Transverse colon (tissue), 4 donors: ENCODE measurements at regions of chr13 and their contacts with region 1.

Region 1: DNA sequence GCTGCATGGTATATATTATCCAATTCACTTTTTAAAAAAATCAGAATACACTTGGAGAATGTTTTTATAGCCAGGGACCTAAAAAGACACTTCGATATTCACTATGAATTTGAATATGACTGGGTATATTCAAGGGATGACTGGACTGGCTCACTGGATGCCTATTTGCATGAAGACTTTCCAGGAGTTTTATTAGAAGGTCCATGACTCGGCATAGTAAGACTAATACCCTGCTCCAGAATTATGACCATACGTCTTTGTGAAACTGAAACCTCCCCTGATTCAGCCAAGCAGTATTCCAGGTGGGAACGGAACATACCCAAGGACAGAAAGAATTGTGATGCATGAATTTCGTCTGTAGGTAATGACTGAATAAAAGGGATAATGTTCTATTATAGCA is 3.9 kb upstream of the FAM216B start:
- DNase-seq: no peak
- H3K4me3 ChIP-seq: no peak overlapping the region
- H3K27ac ChIP-seq: no peak overlapping the region
- H3K4me1 ChIP-seq: no peaks in the 10 kb centered on the region
- H3K27me3 ChIP-seq: no peaks in the 10 kb centered on the region
- CTCF ChIP-seq: no peak
- EP300 ChIP-seq: no peak
- POLR2A ChIP-seq: no peak

Region 2: GRCh38 chr13:42612021-42612765 is 165.3 kb before region 1 on chr13:
- in situ Hi-C with region 1: no loop called
- intact Hi-C with region 1: no loop called
- DNase-seq: no peak
- H3K4me3 ChIP-seq: no peak overlapping the region
- H3K27ac ChIP-seq: no peak overlapping the region
- H3K4me1 ChIP-seq: no peaks in the 10 kb centered on the region
- H3K27me3 ChIP-seq: no peaks in the 10 kb centered on the region
- CTCF ChIP-seq: no peak
- EP300 ChIP-seq: no peak
- POLR2A ChIP-seq: no peak

Region 3: GRCh38 chr13:42794577-42795275 is 17.3 kb after region 1 on chr13:
- in situ Hi-C with region 1: no loop called
- intact Hi-C with region 1: no loop called
- DNase-seq: no peak
- H3K4me3 ChIP-seq: no peak overlapping the region
- H3K27ac ChIP-seq: no peak overlapping the region
- H3K4me1 ChIP-seq: no peaks in the 10 kb centered on the region
- H3K27me3 ChIP-seq: no peaks in the 10 kb centered on the region
- CTCF ChIP-seq: no peak
- EP300 ChIP-seq: no peak
- POLR2A ChIP-seq: no peak

Region 4: GRCh38 chr13:42814868-42815267 is 37.4 kb after region 1 on chr13:
- in situ Hi-C with region 1: no loop called
- intact Hi-C with region 1: no loop called
- DNase-seq: no peak
- H3K4me3 ChIP-seq: no peak overlapping the region
- H3K27ac ChIP-seq: no peak overlapping the region
- H3K4me1 ChIP-seq: no peaks in the 10 kb centered on the region
- H3K27me3 ChIP-seq: no peaks in the 10 kb centered on the region
- CTCF ChIP-seq: no peak
- EP300 ChIP-seq: no peak
- POLR2A ChIP-seq: no peak

Region 5: DNA sequence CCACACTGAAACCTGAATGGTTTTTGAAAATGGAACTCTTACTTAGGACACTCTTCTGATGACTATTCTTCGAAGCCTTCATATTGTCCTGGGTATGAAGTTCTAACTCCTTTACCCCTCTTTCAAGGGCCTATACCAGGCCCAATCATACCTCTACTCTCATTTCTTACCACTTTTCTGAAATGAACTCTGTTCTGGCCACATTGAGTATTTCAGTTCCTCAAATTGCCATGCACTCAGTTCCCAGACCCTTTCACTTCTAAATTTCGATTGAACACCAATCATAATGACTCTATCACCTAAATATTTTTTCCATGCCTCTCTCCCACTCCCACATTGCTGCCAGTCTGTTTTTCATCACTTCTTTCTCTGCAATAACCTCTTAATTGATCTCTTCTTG is 1155.9 kb after region 1 on chr13:
- in situ Hi-C with region 1: no loop called
- intact Hi-C with region 1: loop called (anchors 5 kb)
- DNase-seq: no peak
- H3K4me3 ChIP-seq: no peak overlapping the region
- H3K27ac ChIP-seq: no peak overlapping the region
- H3K4me1 ChIP-seq: peaks cover 0 to 6% (median 0%) of the 10 kb centered on the region in 4 donors
- H3K27me3 ChIP-seq: no peaks in the 10 kb centered on the region
- CTCF ChIP-seq: no peak
- EP300 ChIP-seq: no peak
- POLR2A ChIP-seq: no peak